ENCODE measurements at regions of chr9 and their contacts with region 1.

Region 1: GRCh38 chr9:5062631-5063030 is 77.6 kb downstream of the JAK2 start:
- DNase-seq: no peak
- ATAC-seq: no peak
- H3K4me3 ChIP-seq: no peak overlapping the region
- H3K27ac ChIP-seq: no peak overlapping the region
- H3K4me1 ChIP-seq: no peaks in the 10 kb centered on the region
- H3K27me3 ChIP-seq: no peaks in the 10 kb centered on the region
- CTCF ChIP-seq: no peak
- EP300 ChIP-seq: no peak
- POLR2A ChIP-seq: no peak
- RAD21 ChIP-seq: no peak

Region 2: GRCh38 chr9:5002811-5003210 is 59.8 kb before region 1 on chr9:
- CTCF ChIA-PET with region 1: no interaction called
- POLR2A ChIA-PET with region 1: no interaction called
- in situ Hi-C with region 1: loop called (anchors 10 kb)
- intact Hi-C with region 1: no loop called
- DNase-seq: no peak
- ATAC-seq: no peak
- H3K4me3 ChIP-seq: no peak overlapping the region
- H3K27ac ChIP-seq: no peak overlapping the region
- H3K4me1 ChIP-seq: no peaks in the 10 kb centered on the region
- H3K27me3 ChIP-seq: no peaks in the 10 kb centered on the region
- CTCF ChIP-seq: no peak
- EP300 ChIP-seq: no peak
- POLR2A ChIP-seq: no peak
- RAD21 ChIP-seq: no peak

Measured in HepG2 (cell line).